ENCODE measurements at regions of chr15 and their contacts with region 1.

Region 1: DNA sequence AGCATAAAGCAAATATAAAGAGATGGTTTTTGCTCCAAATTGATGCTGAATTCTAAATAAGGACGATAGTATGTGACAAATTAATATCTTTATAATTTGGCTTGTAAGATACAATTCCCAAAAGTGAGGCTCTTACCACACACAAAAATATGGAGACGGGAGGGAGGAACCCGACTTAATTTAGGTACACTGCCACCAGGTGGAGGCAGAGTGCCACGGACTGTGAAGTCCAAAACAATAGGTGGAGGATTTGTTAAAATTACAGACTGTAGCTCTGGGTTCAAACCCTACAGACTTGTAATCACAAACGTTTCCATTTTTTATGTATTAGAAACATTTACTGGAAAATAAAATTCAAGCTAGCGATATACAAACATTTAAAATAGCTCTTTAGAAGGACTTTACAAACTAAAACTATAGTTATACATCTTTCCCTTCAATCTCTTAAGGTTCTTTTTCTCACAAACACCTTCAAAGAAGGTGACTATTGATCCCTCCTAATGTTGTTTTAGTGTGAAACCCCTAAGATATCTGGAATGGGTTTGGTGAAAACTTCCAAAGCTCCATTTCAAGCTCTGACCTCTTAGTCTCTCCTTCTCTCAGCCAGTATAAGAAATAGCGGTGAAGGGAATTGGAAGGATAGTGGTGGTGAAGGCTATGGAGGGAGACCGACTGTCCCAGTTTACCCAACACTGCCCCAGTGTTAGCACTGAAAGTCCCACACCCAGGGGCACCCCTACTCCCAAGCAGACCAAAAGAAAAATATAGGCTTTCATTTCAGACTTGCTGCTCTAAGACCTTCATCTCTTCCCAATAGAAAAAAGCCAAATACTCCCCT is 89.7 kb downstream of the AQP9 start:
- DNase-seq: peak; percentile 41 to 69 (median 61)
- ATAC-seq: peak; percentile 71
- H3K4me3 ChIP-seq: no peak overlapping the region
- H3K4me3 Mint-ChIP-seq: peak overlapping the region in 1 of 10 donors; percentile 40
- H3K27ac ChIP-seq: no peak overlapping the region
- H3K27ac Mint-ChIP-seq: no peak overlapping the region
- H3K4me1 ChIP-seq: no peaks in the 10 kb centered on the region
- H3K4me1 Mint-ChIP-seq: peaks cover 5 to 20% (median 17%) of the 10 kb centered on the region in 7 donors
- H3K27me3 ChIP-seq: no peaks in the 10 kb centered on the region
- H3K27me3 Mint-ChIP-seq: peaks cover 0 to 20% (median 9%) of the 10 kb centered on the region in 5 donors

Region 2: GRCh38 chr15:57440799-57441198 is 787.1 kb before region 1 on chr15:
- CTCF ChIA-PET with region 1: no interaction called
- POLR2A ChIA-PET with region 1: no interaction called
- intact Hi-C with region 1: no loop called
- DNase-seq: no peak
- ATAC-seq: no peak
- H3K4me3 ChIP-seq: no peak overlapping the region
- H3K4me3 Mint-ChIP-seq: no peak overlapping the region
- H3K27ac ChIP-seq: no peak overlapping the region
- H3K27ac Mint-ChIP-seq: no peak overlapping the region
- H3K4me1 ChIP-seq: no peaks in the 10 kb centered on the region
- H3K4me1 Mint-ChIP-seq: peaks cover 0 to 4% (median 0%) of the 10 kb centered on the region in 7 donors
- H3K27me3 ChIP-seq: no peaks in the 10 kb centered on the region
- H3K27me3 Mint-ChIP-seq: peaks cover 10 to 14% (median 13%) of the 10 kb centered on the region in 5 donors

Region 3: DNA sequence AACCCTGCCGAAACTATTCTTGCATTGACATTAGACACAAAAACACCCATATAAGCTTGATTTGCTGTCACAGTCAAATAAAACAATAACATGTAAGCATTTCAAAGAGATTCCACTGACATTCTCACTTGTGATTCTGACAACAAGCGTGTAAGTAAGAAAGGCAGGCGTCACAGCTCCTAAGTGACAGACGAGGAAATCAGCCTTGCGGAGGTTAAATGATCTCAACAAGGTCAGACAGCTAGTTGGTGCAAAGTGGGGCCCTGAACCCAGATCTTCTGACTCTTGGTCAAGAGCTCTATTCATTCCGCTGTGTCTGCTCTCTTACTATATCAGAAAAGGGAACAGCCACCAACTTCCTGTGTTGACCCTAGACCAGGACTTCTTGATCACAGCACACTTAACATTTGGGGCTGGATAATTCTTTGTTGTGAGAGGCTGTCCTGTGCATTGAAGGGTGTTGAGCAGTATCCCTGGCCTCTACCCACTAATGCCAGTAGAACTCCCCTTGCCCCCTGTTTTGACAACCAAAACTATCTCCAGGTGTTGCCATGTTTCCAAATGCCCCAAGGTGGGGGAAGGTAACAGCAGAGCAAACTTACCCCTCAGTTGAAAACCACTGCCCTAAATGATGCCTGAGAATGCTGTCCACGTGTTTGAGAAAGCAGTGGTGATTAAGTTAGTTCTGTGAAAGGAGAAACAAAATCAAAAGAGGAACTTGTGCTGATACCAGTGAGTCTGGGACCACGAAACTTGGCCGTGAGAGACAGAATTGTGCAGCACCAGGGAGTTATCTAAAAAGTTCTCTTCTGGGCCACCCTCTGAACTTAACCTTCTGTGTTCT is 290.0 kb after region 1 on chr15:
- CTCF ChIA-PET with region 1: no interaction called
- POLR2A ChIA-PET with region 1: no interaction called
- intact Hi-C with region 1: loop called in 1 of 2 experiments (anchors 5 kb)
- DNase-seq: peak in 5 of 9 donors; percentile 8 to 34 (median 16)
- ATAC-seq: peak; percentile 44
- H3K4me3 ChIP-seq: no peak overlapping the region
- H3K4me3 Mint-ChIP-seq: peak overlapping the region; percentile 38 to 75 (median 52)
- H3K27ac ChIP-seq: peak overlapping the region; percentile 60
- H3K27ac Mint-ChIP-seq: peak overlapping the region; percentile 41 to 95 (median 88)
- H3K4me1 ChIP-seq: peaks cover 0 to 43% of the 10 kb centered on the region in 2 donors
- H3K4me1 Mint-ChIP-seq: peaks cover 51 to 84% (median 72%) of the 10 kb centered on the region in 7 donors
- H3K27me3 ChIP-seq: no peaks in the 10 kb centered on the region
- H3K27me3 Mint-ChIP-seq: no peaks in the 10 kb centered on the region

Region 4: DNA sequence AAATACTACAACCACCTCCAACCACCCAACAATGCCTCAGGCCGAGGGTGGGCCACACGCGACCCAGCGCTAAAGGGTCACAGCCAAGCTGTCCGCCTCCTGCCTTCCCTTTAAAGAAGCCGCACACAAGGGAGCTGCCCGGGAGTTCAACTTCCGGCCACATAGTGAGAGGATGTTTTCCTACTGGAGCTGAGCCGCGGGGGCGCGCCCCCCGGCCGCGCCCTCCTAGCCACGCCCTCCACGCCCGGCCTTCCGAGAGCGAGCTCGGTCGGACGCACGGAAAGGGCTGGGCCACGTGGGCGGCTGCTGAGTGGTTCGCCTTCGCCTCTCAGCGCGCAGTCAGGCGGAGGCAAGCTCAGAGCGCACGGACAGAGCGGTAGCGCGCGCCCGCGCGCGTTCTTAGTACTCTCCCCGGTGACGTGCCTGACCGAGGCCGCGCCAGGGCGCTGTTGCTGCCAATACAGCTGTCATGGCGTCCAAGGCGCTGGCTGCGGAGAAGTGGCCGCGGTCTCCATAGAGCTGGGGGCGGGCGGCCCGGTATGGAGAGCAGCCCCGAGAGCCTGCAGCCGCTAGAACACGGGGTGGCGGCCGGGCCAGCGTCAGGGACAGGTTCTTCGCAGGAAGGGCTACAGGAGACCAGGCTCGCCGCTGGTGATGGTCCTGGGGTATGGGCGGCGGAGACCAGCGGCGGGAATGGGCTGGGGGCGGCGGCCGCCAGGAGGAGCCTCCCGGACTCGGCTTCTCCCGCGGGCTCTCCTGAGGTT is 543.1 kb after region 1 on chr15 and contains the start of gene MINDY2:
- CTCF ChIA-PET with region 1: interaction called, 6 read pairs
- POLR2A ChIA-PET with region 1: no interaction called
- intact Hi-C with region 1: loop called in 1 of 2 experiments (anchors 5 kb)
- DNase-seq: peak; percentile 85 to 92 (median 90)
- ATAC-seq: peak; percentile 98
- H3K4me3 ChIP-seq: peak within 1 kb of the TSS; percentile 83
- H3K4me3 Mint-ChIP-seq: peak within 1 kb of the TSS in 2 of 10 donors; percentile 2 to 20
- H3K27ac ChIP-seq: peak within 1 kb of the TSS; percentile 90
- H3K27ac Mint-ChIP-seq: peak within 1 kb of the TSS in 7 of 9 donors; percentile 86 to 96 (median 93)
- H3K4me1 ChIP-seq: peaks cover 24 to 32% of the 10 kb centered on the region in 2 donors
- H3K4me1 Mint-ChIP-seq: peaks cover 0 to 21% (median 9%) of the 10 kb centered on the region in 7 donors
- H3K27me3 ChIP-seq: no peaks in the 10 kb centered on the region
- H3K27me3 Mint-ChIP-seq: no peaks in the 10 kb centered on the region
- total RNA-seq, gene MINDY2: 10.4 to 16.6 (median 11.5) TPM

Region 5: DNA sequence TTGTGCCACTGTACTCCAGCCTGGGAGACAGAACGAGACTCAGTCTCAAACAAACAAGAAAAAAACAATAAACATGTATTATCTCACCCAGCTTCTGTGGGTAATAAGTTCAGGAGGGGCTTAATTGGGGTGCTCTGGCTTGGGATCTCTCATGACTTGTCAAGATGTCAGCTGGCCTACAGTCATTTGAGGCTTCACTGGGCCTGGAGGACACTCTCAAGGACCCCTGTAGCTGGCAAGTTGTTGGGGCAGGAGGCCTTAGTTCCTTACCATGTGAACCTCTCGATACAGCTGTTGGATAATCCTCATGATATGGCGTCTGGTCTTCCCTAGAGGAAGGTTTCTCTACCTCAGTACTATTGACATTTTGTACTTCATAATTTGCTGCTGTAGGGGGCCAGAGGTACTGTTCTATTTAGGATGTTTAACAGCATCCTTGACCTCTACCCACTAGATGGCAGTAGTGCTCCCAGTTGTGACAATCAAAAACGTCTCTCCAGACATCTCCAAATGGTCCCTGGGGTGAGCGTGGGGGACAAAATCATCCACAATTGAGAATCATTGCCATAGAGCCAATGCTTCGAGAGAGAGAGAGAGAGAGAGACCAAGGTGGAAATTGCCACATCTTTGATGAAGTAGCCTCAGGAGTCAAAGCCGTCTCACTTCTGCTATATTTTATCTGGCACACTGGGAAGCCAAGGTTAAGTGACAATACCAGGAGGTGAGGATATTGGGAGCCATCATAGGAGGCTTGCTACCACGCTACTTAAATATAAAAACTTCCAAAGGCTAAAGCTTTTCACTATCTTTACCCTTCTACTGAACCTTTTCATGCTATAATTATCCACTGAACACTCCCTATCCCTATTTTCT is 729.4 kb after region 1 on chr15:
- CTCF ChIA-PET with region 1: no interaction called
- POLR2A ChIA-PET with region 1: no interaction called
- intact Hi-C with region 1: loop called (anchors 1 to 2 kb)
- DNase-seq: peak in 8 of 9 donors; percentile 37 to 69 (median 63)
- ATAC-seq: peak; percentile 99
- H3K4me3 ChIP-seq: no peak overlapping the region
- H3K4me3 Mint-ChIP-seq: peak overlapping the region in 1 of 10 donors; percentile 39
- H3K27ac ChIP-seq: no peak overlapping the region
- H3K27ac Mint-ChIP-seq: no peak overlapping the region
- H3K4me1 ChIP-seq: no peaks in the 10 kb centered on the region
- H3K4me1 Mint-ChIP-seq: peaks cover 0 to 14% (median 8%) of the 10 kb centered on the region in 7 donors
- H3K27me3 ChIP-seq: peaks cover 0 to 3% of the 10 kb centered on the region in 2 donors
- H3K27me3 Mint-ChIP-seq: peaks cover 0 to 11% (median 0%) of the 10 kb centered on the region in 5 donors

Region 6: GRCh38 chr15:59138243-59138642 is 910.3 kb after region 1 on chr15:
- CTCF ChIA-PET with region 1: no interaction called
- POLR2A ChIA-PET with region 1: no interaction called
- intact Hi-C with region 1: loop called in 1 of 2 experiments (anchors 5 kb)
- DNase-seq: peak; percentile 23 to 48 (median 38)
- ATAC-seq: peak; percentile 92
- H3K4me3 ChIP-seq: no peak overlapping the region
- H3K4me3 Mint-ChIP-seq: no peak overlapping the region
- H3K27ac ChIP-seq: no peak overlapping the region
- H3K27ac Mint-ChIP-seq: peak overlapping the region in 2 of 9 donors; percentile 0 to 34
- H3K4me1 ChIP-seq: no peaks in the 10 kb centered on the region
- H3K4me1 Mint-ChIP-seq: peaks cover 0 to 46% (median 5%) of the 10 kb centered on the region in 7 donors
- H3K27me3 ChIP-seq: no peaks in the 10 kb centered on the region
- H3K27me3 Mint-ChIP-seq: no peaks in the 10 kb centered on the region

Region 7: GRCh38 chr15:59622289-59622688 is 1394.4 kb after region 1 on chr15:
- CTCF ChIA-PET with region 1: no interaction called
- POLR2A ChIA-PET with region 1: no interaction called
- intact Hi-C with region 1: loop called in 1 of 2 experiments (anchors 5 kb)
- DNase-seq: peak in 1 of 9 donors; percentile 48
- ATAC-seq: no peak
- H3K4me3 ChIP-seq: no peak overlapping the region
- H3K4me3 Mint-ChIP-seq: no peak overlapping the region
- H3K27ac ChIP-seq: no peak overlapping the region
- H3K27ac Mint-ChIP-seq: no peak overlapping the region
- H3K4me1 ChIP-seq: no peaks in the 10 kb centered on the region
- H3K4me1 Mint-ChIP-seq: no peaks in the 10 kb centered on the region
- H3K27me3 ChIP-seq: peaks cover 0 to 3% of the 10 kb centered on the region in 2 donors
- H3K27me3 Mint-ChIP-seq: peaks cover 0 to 25% (median 12%) of the 10 kb centered on the region in 5 donors